OCI-LY7 (cell line): ENCODE measurements at regions of chrX and their contacts with region 1.

Region 1: GRCh38 chrX:57821703-57822375 is 88.4 kb downstream of the ZXDA start:
- DNase-seq: peak; percentile 65
- H3K4me3 ChIP-seq: no peak overlapping the region
- H3K27ac ChIP-seq: no peak overlapping the region
- H3K4me1 ChIP-seq: no peaks in the 10 kb centered on the region
- CTCF ChIP-seq: peak; percentile 76

Region 2: GRCh38 chrX:57573754-57574153 is 248.1 kb before region 1 on chrX:
- CTCF ChIA-PET with region 1: no interaction called
- POLR2A ChIA-PET with region 1: no interaction called
- intact Hi-C with region 1: loop called (anchors 10 kb)
- DNase-seq: peak; percentile 31
- H3K4me3 ChIP-seq: no peak overlapping the region
- H3K27ac ChIP-seq: no peak overlapping the region
- H3K4me1 ChIP-seq: no peaks in the 10 kb centered on the region
- CTCF ChIP-seq: peak; percentile 70

Region 3: GRCh38 chrX:57741107-57741506 is 80.7 kb before region 1 on chrX:
- CTCF ChIA-PET with region 1: no interaction called
- POLR2A ChIA-PET with region 1: no interaction called
- intact Hi-C with region 1: no loop called
- DNase-seq: no peak
- H3K4me3 ChIP-seq: no peak overlapping the region
- H3K27ac ChIP-seq: no peak overlapping the region
- H3K4me1 ChIP-seq: no peaks in the 10 kb centered on the region
- CTCF ChIP-seq: no peak

Region 4: DNA sequence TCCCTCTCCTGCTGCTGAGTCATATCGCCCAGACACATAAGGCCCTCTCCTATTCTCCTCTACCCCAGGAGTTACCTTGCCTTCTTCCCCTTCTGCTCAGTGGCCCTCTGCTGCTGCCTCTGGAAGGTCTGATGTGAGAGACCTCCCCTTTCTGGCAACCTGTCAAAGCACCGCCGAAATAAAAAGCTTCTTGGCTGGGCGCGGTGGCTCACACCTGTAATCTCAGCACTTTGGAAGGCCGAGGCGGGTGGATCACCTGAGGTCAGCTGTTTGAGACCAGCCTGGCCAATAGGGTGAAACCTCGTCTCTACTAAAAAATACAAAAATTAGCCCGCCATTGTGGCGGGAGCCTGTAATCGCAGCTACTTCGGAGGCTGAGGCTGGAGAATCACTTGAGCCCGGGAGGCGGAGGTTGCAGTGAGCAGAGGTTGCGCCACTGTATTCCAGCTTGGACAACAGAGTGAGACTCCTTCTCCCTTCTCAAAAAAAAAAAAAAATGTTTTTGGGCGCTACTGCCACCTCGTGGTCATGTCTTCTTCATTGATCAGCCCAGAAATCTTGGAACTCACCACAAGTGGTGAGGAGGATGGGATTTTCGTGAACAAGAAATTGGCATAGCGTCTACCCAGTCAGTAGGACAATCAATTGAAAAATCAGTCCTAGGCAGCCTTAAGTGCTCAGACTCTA is 97.1 kb after region 1 on chrX:
- CTCF ChIA-PET with region 1: no interaction called
- POLR2A ChIA-PET with region 1: no interaction called
- intact Hi-C with region 1: loop called (anchors 2 kb)
- DNase-seq: peak; percentile 36
- H3K4me3 ChIP-seq: no peak overlapping the region
- H3K27ac ChIP-seq: no peak overlapping the region
- H3K4me1 ChIP-seq: no peaks in the 10 kb centered on the region
- CTCF ChIP-seq: peak; percentile 69

Region 5: GRCh38 chrX:57929373-57929772 is 107.5 kb after region 1 on chrX:
- CTCF ChIA-PET with region 1: no interaction called
- POLR2A ChIA-PET with region 1: no interaction called
- intact Hi-C with region 1: loop called (anchors 2 kb)
- DNase-seq: peak; percentile 44
- H3K4me3 ChIP-seq: no peak overlapping the region
- H3K27ac ChIP-seq: no peak overlapping the region
- H3K4me1 ChIP-seq: no peaks in the 10 kb centered on the region
- CTCF ChIP-seq: peak; percentile 75